ENCODE measurements at regions of chr11 and their contacts with region 1.

Region 1: DNA sequence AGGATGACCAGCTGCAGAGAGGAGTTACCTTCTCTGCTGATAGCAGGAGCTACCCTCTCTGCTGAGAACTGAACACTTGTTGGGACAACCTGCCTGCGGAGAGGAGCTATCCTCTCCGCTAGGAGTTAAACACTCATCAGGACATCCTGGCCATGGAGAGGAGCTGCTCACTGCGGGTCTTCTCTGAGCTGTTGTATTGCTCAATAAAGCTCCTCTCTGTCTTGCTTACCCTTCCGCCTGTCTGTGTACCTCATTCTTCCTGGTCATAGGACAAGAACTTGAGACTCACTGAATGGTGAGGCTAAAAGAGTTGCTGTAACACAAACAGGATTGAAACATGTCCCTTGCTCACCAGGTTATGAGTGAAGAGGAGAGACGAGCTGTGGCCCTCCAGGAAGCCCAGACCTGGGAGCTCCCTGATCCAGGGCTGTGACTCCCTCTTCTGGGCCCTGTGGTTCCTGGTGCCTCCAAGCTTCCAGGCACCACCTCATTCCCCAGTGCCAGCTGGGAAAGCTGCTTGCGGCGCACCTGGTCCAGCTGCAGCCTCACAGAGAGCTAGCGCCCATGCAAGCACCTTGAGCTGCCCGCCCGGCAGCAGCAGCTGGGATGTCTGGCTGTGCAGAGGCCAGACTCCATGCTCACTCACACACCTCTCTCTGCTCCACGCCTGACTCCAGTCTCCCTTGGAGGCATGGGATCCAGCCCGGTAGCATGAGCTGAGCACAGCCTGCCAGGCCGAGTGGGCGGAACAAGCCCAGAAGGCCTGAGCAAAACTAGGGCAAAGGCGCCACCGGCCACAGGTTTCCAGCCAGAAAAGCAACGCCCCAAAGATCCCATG is 50.5 kb downstream of the RAB30 start:
- DNase-seq: no peak
- H3K27ac ChIP-seq: no peak overlapping the region
- CTCF ChIP-seq: no peak

Region 2: DNA sequence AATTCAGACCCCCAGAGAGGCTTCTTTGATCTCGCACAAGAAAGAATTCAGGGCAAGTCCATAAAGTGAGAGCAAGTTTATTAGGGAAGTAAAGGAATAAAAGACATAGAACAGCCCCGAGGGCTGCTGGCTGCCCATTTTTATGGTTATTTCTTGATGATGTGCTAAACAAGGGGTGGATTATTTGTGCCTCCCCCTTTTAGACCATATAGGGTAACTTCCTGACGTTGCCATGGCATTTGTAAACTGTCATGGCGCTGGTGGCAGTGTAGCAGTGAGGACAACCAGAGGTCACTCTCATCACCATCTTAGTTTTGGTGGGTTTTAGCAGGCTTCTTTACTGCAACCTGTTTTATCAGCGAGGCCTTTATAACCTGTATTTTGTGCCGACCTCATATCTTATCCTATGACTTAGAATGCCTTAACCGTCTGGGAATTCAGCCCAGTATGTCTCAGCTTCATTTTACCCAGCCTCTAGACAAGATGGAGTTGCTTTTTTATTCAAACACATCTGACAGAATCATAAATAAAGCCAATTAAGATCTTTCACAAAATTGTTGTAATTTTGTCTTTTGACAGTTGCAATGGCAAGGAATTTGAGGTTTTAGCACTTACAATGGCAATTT is 112.0 kb before region 1 on chr11:
- CTCF ChIA-PET with region 1: no interaction called
- POLR2A ChIA-PET with region 1: no interaction called
- DNase-seq: no peak
- H3K27ac ChIP-seq: no peak overlapping the region
- CTCF ChIP-seq: no peak

Region 3: DNA sequence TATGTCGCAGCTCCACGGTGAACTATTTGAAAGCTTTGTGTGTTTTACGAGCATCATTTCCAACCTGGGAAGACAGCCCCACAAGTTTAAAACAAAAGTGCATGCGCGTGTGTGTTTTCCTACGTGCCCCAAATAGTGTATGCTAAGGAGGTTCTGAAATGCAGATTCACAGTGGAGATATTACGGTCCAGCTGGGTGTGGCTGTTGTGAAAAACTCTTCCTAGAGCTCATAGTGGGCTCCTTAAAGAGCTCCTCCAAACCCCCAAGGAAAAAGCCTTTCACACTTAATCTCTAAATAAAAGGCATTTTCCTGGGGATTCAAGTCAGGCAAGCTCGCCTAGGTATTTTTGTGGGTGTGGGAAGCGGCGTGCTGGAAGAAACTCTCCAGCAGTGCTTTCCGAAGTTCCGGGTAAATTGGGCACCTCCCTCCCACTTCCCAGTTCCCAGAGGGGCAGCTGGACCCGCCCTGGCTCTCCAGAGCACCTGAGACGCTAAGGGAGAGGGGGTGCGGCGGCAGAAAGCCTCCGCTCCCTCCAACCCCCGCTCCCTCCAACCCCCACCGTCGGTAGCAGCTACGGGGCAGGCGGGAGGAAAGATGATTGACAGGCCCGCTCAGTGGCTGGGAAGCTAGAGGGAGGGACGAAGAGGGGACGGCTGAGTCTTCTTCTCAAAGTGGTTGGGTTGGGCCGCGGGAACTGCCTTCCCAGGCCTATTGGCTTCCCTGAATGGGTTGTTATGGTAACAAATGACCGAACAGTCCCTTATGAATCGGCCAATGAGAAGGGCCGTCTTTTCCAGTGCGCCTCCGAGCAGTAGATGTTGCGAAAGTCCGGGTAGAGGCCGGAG is 135.2 kb after region 1 on chr11:
- CTCF ChIA-PET with region 1: no interaction called
- POLR2A ChIA-PET with region 1: interaction called, 14 read pairs
- DNase-seq: peak; percentile 99
- H3K27ac ChIP-seq: peak overlapping the region; percentile 95
- CTCF ChIP-seq: no peak